ENCODE measurements at regions of chrX and their contacts with region 1.

Region 1: GRCh38 chrX:46573331-46573891 is at the start of gene CHST7:
- DNase-seq: peak; percentile 75
- H3K4me3 ChIP-seq: peak within 1 kb of the TSS; percentile 48 to 74 (median 67)
- H3K27ac ChIP-seq: peak within 1 kb of the TSS; percentile 52
- H3K4me1 ChIP-seq: peaks cover 30% of the 10 kb centered on the region
- H3K27me3 ChIP-seq: no peaks in the 10 kb centered on the region
- CTCF ChIP-seq: peak; percentile 33 to 38
- POLR2A ChIP-seq: no peak
- total RNA-seq, gene CHST7: 9.8 and 11.2 TPM in 2 replicates

Region 2: GRCh38 chrX:46599051-46599560 is 25.7 kb after region 1 on chrX:
- CTCF ChIA-PET with region 1: interaction called, 11 read pairs
- POLR2A ChIA-PET with region 1: no interaction called
- dilution Hi-C with region 1: no loop called
- intact Hi-C with region 1: no loop called
- DNase-seq: no peak
- H3K4me3 ChIP-seq: no peak overlapping the region
- H3K27ac ChIP-seq: no peak overlapping the region
- H3K4me1 ChIP-seq: peaks cover 6% of the 10 kb centered on the region
- H3K27me3 ChIP-seq: no peaks in the 10 kb centered on the region
- CTCF ChIP-seq: no peak
- POLR2A ChIP-seq: no peak

Region 3: DNA sequence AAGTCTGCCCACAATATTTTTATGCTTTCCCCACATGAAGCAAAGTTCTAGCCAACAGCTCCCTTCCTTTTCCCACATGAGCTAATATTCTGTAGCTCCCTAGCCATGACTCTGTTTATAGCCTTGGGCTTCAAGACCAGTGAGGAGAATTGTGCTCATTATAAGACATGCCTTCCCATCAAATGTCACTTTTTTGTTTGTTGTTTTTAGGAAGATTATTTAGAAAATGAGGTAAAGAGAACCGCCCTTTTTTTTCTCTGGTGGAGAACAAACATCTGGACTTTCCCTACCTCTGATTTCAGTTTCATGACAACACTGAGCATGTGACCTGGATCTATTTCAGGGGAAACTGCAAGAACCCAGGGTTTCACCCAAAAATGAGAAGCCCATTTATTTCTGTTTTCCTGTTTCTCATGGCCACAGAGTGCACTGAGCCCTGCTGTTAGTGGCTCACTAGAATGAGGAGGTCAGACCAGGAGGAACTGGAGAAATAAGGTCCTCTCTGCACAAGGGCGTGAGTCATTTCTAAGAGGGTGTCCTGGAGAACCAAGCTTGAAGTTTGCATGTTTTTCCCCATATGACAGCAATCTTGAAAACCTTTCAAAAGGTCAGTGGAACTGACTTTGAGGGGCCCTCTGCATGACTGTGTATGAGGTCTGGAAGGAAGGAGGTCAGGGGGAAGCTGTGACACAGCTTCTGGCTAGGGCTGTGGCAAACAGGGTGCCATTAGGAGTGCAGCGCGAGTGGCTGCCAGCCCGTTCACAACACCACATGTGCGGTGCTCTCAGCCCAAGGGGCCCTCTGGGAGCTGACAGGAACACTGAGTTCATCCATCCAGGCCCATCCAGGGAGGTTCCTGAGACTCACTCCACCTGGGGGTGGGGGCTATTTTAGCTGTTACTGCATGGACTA is 55.3 kb after region 1 on chrX:
- CTCF ChIA-PET with region 1: no interaction called
- POLR2A ChIA-PET with region 1: no interaction called
- dilution Hi-C with region 1: no loop called
- intact Hi-C with region 1: loop called (anchors 1 kb)
- DNase-seq: peak; percentile 47
- H3K4me3 ChIP-seq: no peak overlapping the region
- H3K27ac ChIP-seq: peak overlapping the region; percentile 39
- H3K4me1 ChIP-seq: peaks cover 32% of the 10 kb centered on the region
- H3K27me3 ChIP-seq: no peaks in the 10 kb centered on the region
- CTCF ChIP-seq: no peak
- POLR2A ChIP-seq: no peak

Region 4: GRCh38 chrX:46642145-46642544 is 68.7 kb after region 1 on chrX:
- CTCF ChIA-PET with region 1: interaction called, 7 read pairs
- POLR2A ChIA-PET with region 1: no interaction called
- dilution Hi-C with region 1: no loop called
- intact Hi-C with region 1: loop called (anchors 1 kb)
- DNase-seq: peak; percentile 42
- H3K4me3 ChIP-seq: no peak overlapping the region
- H3K27ac ChIP-seq: no peak overlapping the region
- H3K4me1 ChIP-seq: peaks cover 3% of the 10 kb centered on the region
- H3K27me3 ChIP-seq: no peaks in the 10 kb centered on the region
- CTCF ChIP-seq: peak in 1 of 2 donors; percentile 16
- POLR2A ChIP-seq: no peak

Measured in endothelial cell of umbilical vein (primary cell).